PC-3 (cell line): ENCODE measurements at regions of chr22 and their contacts with region 1.

Region 1: GRCh38 chr22:22357024-22357883 is 112.7 kb downstream of the VPREB1 start:
- DNase-seq: peak; percentile 74
- ATAC-seq: peak; percentile 91
- H3K4me3 ChIP-seq: no peak overlapping the region
- H3K27ac ChIP-seq: no peak overlapping the region
- H3K4me1 ChIP-seq: no peaks in the 10 kb centered on the region
- H3K27me3 ChIP-seq: 0 out of 2 replicates have a peak, but pooled peaks cover 7% of the 10 kb centered on the region
- CTCF ChIP-seq: peak; percentile 67

Region 2: GRCh38 chr22:22410121-22410520 is 52.9 kb after region 1 on chr22:
- CTCF ChIA-PET with region 1: no interaction called
- POLR2A ChIA-PET with region 1: no interaction called
- intact Hi-C with region 1: loop called (anchors 5 kb)
- DNase-seq: no peak
- ATAC-seq: no peak
- H3K4me3 ChIP-seq: no peak overlapping the region
- H3K27ac ChIP-seq: no peak overlapping the region
- H3K4me1 ChIP-seq: no peaks in the 10 kb centered on the region
- H3K27me3 ChIP-seq: peaks cover 38% of the 10 kb centered on the region
- CTCF ChIP-seq: no peak